Sciatic nerve (tissue), 2 donors: ENCODE measurements at regions of chr6 and their contacts with region 1.

Region 1: DNA sequence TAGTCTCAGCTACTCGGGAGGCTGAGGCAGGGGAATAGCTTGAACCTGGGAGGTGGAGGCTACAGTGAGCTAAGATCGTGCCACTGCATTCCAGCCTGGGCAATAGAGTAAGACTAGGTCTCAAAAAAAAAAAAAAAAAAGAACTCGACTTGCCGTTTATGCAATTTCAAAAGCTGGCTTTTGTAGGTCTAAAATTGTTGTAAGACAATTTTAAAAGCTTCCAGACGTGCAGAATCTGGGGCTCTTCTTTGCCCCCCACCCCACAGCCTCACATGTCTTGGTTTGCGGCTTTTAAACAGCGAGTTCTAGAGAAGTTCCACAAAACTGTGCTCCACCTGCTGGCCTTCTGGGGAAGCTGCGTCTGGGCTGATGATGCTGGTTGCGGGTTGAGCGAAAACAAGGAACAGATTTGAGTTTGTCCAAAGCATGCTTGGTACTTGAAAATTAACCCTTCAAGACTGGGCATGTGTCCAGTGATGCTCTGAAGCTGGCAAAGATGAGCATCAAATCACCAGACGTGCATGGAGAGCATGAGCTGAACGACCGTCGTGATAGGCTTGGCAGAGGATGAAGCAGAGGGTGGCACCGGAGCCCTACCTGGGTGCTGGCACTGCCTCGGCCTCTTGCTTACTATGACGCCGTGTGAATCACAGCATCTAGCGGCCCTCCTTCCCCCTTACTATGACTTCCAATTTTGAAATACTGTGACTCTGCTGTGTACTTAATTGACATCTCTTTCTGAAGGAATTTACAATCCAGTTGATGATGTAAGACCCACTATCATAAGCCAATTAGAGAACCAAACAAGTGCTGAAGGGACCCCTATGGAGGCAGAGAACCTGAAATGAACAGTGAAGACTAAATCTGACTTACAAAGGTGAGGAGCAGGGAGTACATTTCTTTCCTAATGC is 171.4 kb downstream of the GMPR start:
- DNase-seq: peak; percentile 76
- ATAC-seq: peak; percentile 78

Region 2: GRCh38 chr6:16332175-16332542 is 77.6 kb before region 1 on chr6:
- intact Hi-C with region 1: loop called (anchors 5 kb)
- DNase-seq: peak; percentile 90
- ATAC-seq: peak; percentile 85

Region 3: GRCh38 chr6:16438718-16439591 is 29.2 kb after region 1 on chr6:
- intact Hi-C with region 1: no loop called
- DNase-seq: no peak
- ATAC-seq: peak; percentile 45